Sigmoid colon (tissue), 7 donors: ENCODE measurements at regions of chr1 and their contacts with region 1.

Region 1: GRCh38 chr1:45550401-45551351 is at the start of gene AKR1A1:
- DNase-seq: peak; percentile 91
- H3K4me3 ChIP-seq: peak within 1 kb of the TSS; percentile 39 to 77 (median 64)
- H3K27ac ChIP-seq: peak within 1 kb of the TSS; percentile 73 to 89 (median 82)
- H3K4me1 ChIP-seq: peaks cover 0 to 16% (median 14%) of the 10 kb centered on the region in 4 donors
- H3K27me3 ChIP-seq: no peaks in the 10 kb centered on the region
- CTCF ChIP-seq: peak in 2 of 4 experiments; percentile 13 to 42
- EP300 ChIP-seq: peak in 1 of 4 donors; percentile 44
- POLR2A ChIP-seq: peak in 1 of 2 donors; percentile 54
- total RNA-seq, gene AKR1A1: 39.6 to 64.2 (median 55.1) TPM

Region 2: GRCh38 chr1:45410850-45411314 is 139.8 kb before region 1 on chr1:
- intact Hi-C with region 1: no loop called
- DNase-seq: no peak
- H3K4me3 ChIP-seq: no peak overlapping the region
- H3K27ac ChIP-seq: no peak overlapping the region
- H3K4me1 ChIP-seq: no peaks in the 10 kb centered on the region
- H3K27me3 ChIP-seq: no peaks in the 10 kb centered on the region
- CTCF ChIP-seq: no peak
- EP300 ChIP-seq: no peak
- POLR2A ChIP-seq: no peak

Region 3: DNA sequence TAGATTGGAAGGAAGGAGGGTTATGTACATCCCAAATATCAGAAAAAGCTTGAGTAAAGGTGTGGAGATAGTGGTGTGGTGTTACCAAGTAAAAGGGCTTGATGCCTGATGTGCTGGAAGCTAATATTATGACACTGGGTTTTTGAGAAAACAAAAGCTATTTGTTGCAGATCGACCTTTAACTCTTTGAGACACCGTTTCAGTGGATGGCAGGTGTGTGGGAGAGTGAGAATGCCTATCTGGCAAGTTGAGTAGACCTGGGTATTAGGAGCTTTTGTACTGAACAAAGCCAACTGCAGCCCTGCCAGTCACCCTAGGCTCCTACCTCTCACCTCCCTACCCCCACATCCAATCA is 49.2 kb before region 1 on chr1:
- intact Hi-C with region 1: loop called (anchors 2 kb)
- DNase-seq: no peak
- H3K4me3 ChIP-seq: no peak overlapping the region
- H3K27ac ChIP-seq: no peak overlapping the region
- H3K4me1 ChIP-seq: peaks cover 0 to 18% (median 15%) of the 10 kb centered on the region in 4 donors
- H3K27me3 ChIP-seq: no peaks in the 10 kb centered on the region
- CTCF ChIP-seq: no peak
- EP300 ChIP-seq: no peak
- POLR2A ChIP-seq: no peak

Region 4: DNA sequence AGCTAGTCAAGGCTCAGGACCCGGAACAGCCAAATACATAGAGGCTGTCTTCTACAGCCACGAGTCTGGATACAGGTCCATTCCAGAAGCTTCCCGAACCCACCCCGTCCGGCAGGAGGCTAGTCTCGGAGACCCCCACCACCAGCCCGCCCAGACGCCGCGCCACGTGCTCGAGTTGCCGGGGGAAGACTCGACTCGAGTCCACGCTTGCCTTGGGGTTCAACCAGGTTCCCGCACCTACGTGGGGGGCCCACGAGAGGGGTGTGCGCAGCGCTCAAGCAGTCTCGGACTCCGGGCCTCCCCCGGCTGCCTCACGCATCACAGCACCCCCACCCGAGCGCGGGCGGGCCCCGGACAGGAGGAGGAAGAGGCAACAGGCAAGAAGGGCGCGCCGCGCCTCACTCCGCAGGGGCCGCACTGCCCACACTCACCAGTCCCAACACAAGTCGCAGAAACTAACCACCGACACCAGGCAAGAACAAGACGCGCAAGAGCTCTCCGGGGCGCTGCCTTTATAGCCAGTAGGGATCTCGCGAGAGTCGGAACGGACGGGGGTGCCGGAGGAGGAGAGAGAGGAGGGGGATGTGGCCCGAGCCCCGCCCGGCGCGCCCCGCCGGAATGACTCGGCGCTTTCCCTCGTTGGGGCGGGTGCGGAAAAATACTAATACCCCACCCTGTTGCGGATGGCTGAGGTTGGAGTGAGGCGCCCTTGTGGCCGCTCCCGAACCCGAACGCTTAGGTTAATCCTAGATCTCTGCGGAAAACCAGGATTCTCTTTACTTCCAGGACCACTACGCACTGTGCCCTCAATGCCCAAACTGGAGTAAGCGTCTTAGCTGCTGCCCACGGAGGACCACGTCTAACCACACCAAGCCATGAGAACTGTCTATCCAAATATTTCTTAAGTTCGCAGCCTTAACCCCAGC is 29.0 kb before region 1 on chr1 and contains the start of gene PRDX1:
- intact Hi-C with region 1: loop called (anchors 2 kb)
- DNase-seq: peak; percentile 99
- H3K4me3 ChIP-seq: peak within 1 kb of the TSS; percentile 83 to 96 (median 86)
- H3K27ac ChIP-seq: peak within 1 kb of the TSS; percentile 90 to 97 (median 92)
- H3K4me1 ChIP-seq: peaks cover 0 to 32% (median 22%) of the 10 kb centered on the region in 4 donors
- H3K27me3 ChIP-seq: no peaks in the 10 kb centered on the region
- CTCF ChIP-seq: peak in 1 of 4 experiments; percentile 13
- EP300 ChIP-seq: peak in 2 of 4 donors; percentile 29 to 41
- POLR2A ChIP-seq: peak; percentile 98 to 99
- total RNA-seq, gene PRDX1: 169 to 257 (median 224) TPM

Region 5: GRCh38 chr1:45589861-45590260 is 39.2 kb after region 1 on chr1:
- intact Hi-C with region 1: no loop called
- DNase-seq: no peak
- H3K4me3 ChIP-seq: no peak overlapping the region
- H3K27ac ChIP-seq: no peak overlapping the region
- H3K4me1 ChIP-seq: peaks cover 0 to 29% (median 22%) of the 10 kb centered on the region in 4 donors
- H3K27me3 ChIP-seq: no peaks in the 10 kb centered on the region
- CTCF ChIP-seq: no peak
- EP300 ChIP-seq: no peak
- POLR2A ChIP-seq: no peak